ENCODE measurements at regions of chr7 and their contacts with region 1.

Region 1: GRCh38 chr7:94556028-94556427 is 46.4 kb downstream of the CASD1 start:
- DNase-seq: no peak
- ATAC-seq: peak; percentile 92
- H3K4me3 Mint-ChIP-seq: peak overlapping the region; percentile 25
- H3K27ac Mint-ChIP-seq: peak overlapping the region; percentile 9
- H3K4me1 Mint-ChIP-seq: peaks cover 37% of the 10 kb centered on the region
- H3K27me3 Mint-ChIP-seq: no peaks in the 10 kb centered on the region
- CTCF ChIP-seq: no peak

Region 2: GRCh38 chr7:93902777-93903423 is 653.1 kb before region 1 on chr7:
- CTCF ChIA-PET with region 1: no interaction called
- POLR2A ChIA-PET with region 1: no interaction called
- intact Hi-C with region 1: no loop called
- DNase-seq: no peak
- ATAC-seq: no peak
- H3K4me3 Mint-ChIP-seq: no peak overlapping the region
- H3K27ac Mint-ChIP-seq: no peak overlapping the region
- H3K4me1 Mint-ChIP-seq: no peaks in the 10 kb centered on the region
- H3K27me3 Mint-ChIP-seq: peaks cover 17% of the 10 kb centered on the region
- CTCF ChIP-seq: peak; percentile 74

Region 3: GRCh38 chr7:94540428-94540827 is 15.6 kb before region 1 on chr7:
- CTCF ChIA-PET with region 1: no interaction called
- POLR2A ChIA-PET with region 1: no interaction called
- intact Hi-C with region 1: loop called (anchors 2 kb)
- DNase-seq: no peak
- ATAC-seq: no peak
- H3K4me3 Mint-ChIP-seq: no peak overlapping the region
- H3K27ac Mint-ChIP-seq: no peak overlapping the region
- H3K4me1 Mint-ChIP-seq: no peaks in the 10 kb centered on the region
- H3K27me3 Mint-ChIP-seq: no peaks in the 10 kb centered on the region
- CTCF ChIP-seq: no peak

Region 4: GRCh38 chr7:94591176-94591575 is 35.1 kb after region 1 on chr7:
- CTCF ChIA-PET with region 1: no interaction called
- POLR2A ChIA-PET with region 1: no interaction called
- intact Hi-C with region 1: loop called (anchors 5 kb)
- DNase-seq: no peak
- ATAC-seq: peak; percentile 90
- H3K4me3 Mint-ChIP-seq: peak overlapping the region; percentile 42
- H3K27ac Mint-ChIP-seq: peak overlapping the region; percentile 0
- H3K4me1 Mint-ChIP-seq: peaks cover 17% of the 10 kb centered on the region
- H3K27me3 Mint-ChIP-seq: no peaks in the 10 kb centered on the region
- CTCF ChIP-seq: no peak

Region 5: DNA sequence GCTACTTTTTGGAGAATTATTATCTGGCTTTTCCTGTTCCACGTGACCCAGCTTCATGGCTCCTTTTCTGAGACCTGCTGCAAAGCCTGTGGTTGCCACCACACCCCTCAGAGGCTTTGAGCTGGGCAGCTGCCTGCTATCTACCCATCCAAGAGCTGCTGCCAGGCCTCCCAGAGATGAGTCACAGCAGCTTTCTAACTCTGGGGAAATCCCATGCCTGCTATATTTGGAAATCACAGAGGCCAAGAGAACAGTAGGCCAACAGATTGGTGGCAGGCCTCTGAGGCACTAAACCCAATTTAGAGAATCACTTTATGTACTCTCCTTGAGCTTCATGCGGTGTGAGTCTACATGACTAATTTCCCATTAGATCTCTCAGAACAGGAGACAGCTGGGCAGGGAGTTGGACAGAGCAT is 64.7 kb after region 1 on chr7:
- CTCF ChIA-PET with region 1: no interaction called
- POLR2A ChIA-PET with region 1: no interaction called
- intact Hi-C with region 1: loop called (anchors 2 kb)
- DNase-seq: peak; percentile 23
- ATAC-seq: peak; percentile 98
- H3K4me3 Mint-ChIP-seq: no peak overlapping the region
- H3K27ac Mint-ChIP-seq: peak overlapping the region; percentile 68
- H3K4me1 Mint-ChIP-seq: peaks cover 11% of the 10 kb centered on the region
- H3K27me3 Mint-ChIP-seq: no peaks in the 10 kb centered on the region
- CTCF ChIP-seq: no peak